Heart left ventricle (tissue), 16 donors: ENCODE measurements at regions of chr9 and their contacts with region 1.

Region 1: DNA sequence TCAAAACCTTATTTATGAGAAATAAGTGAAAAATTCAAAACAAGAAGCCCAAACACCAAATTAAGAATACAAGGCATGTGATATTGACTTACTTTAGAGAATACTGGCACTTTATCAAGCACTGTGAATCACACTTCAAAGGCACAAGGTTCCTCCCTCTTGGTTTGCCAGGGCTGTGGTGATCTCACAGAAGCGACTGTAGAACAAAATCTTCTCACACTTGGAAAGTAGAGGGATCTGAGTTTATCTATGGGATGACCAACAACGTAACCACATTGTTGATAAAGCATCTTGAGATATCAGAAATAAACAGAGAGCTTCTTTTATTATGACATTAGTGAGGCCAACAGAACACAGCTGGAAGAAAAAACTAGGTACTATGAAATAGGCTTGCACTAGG is 295.9 kb downstream of the NFIB start:
- DNase-seq: no peak
- ATAC-seq: no peak
- H3K4me3 ChIP-seq: no peak overlapping the region
- H3K27ac ChIP-seq: peak overlapping the region in 5 of 12 donors; percentile 6 to 28 (median 11)
- H3K4me1 ChIP-seq: peaks cover 0 to 36% (median 9%) of the 10 kb centered on the region in 12 donors
- H3K27me3 ChIP-seq: no peaks in the 10 kb centered on the region
- CTCF ChIP-seq: no peak
- POLR2A ChIP-seq: no peak

Region 2: GRCh38 chr9:13942695-13943094 is 75.4 kb before region 1 on chr9:
- intact Hi-C with region 1: loop called in 1 of 10 experiments (anchors 10 kb)
- DNase-seq: peak in 1 of 5 donors; percentile 49
- ATAC-seq: peak; percentile 43 to 93 (median 82)
- H3K4me3 ChIP-seq: no peak overlapping the region
- H3K27ac ChIP-seq: peak overlapping the region in 6 of 12 donors; percentile 1 to 38 (median 15)
- H3K4me1 ChIP-seq: peaks cover 0 to 32% (median 16%) of the 10 kb centered on the region in 12 donors
- H3K27me3 ChIP-seq: no peaks in the 10 kb centered on the region
- CTCF ChIP-seq: no peak
- POLR2A ChIP-seq: no peak

Region 3: GRCh38 chr9:13962006-13962405 is 56.1 kb before region 1 on chr9:
- intact Hi-C with region 1: loop called in 1 of 10 experiments (anchors 10 kb)
- DNase-seq: no peak
- ATAC-seq: peak in 3 of 4 donors; percentile 42 to 49 (median 44)
- H3K4me3 ChIP-seq: no peak overlapping the region
- H3K27ac ChIP-seq: peak overlapping the region in 1 of 12 donors; percentile 20
- H3K4me1 ChIP-seq: peaks cover 0 to 18% (median 5%) of the 10 kb centered on the region in 12 donors
- H3K27me3 ChIP-seq: no peaks in the 10 kb centered on the region
- CTCF ChIP-seq: no peak
- POLR2A ChIP-seq: no peak

Region 4: GRCh38 chr9:13971966-13972655 is 46.0 kb before region 1 on chr9:
- intact Hi-C with region 1: loop called in 2 of 10 experiments (anchors 5 to 10 kb)
- DNase-seq: no peak
- ATAC-seq: peak in 2 of 4 donors; percentile 28 to 50
- H3K4me3 ChIP-seq: no peak overlapping the region
- H3K27ac ChIP-seq: peak overlapping the region in 6 of 12 donors; percentile 7 to 46 (median 34)
- H3K4me1 ChIP-seq: peaks cover 0 to 36% (median 8%) of the 10 kb centered on the region in 12 donors
- H3K27me3 ChIP-seq: no peaks in the 10 kb centered on the region
- CTCF ChIP-seq: no peak
- POLR2A ChIP-seq: no peak

Region 5: DNA sequence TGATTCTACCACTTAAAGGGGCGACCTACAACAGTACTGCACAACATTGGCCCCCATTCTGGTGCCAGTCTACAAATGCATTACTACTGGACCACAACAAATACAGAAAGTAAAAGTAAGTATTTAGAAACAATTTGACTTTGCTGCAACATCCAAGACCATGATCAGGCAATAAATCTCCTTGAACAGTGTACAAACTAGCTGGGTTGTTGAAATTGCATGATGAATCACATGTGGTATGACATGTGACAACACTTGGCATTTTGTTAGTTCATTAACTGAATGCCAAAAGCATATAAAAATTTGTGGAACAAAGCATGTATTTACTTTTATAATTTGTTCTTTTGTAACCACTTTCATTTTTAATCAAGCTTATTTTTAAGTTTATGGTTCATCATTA is 25.4 kb after region 1 on chr9:
- intact Hi-C with region 1: no loop called
- DNase-seq: no peak
- ATAC-seq: no peak
- H3K4me3 ChIP-seq: no peak overlapping the region
- H3K27ac ChIP-seq: no peak overlapping the region
- H3K4me1 ChIP-seq: no peaks in the 10 kb centered on the region
- H3K27me3 ChIP-seq: no peaks in the 10 kb centered on the region
- CTCF ChIP-seq: no peak
- POLR2A ChIP-seq: no peak

Region 6: GRCh38 chr9:14056316-14056861 is 38.3 kb after region 1 on chr9:
- intact Hi-C with region 1: no loop called
- DNase-seq: no peak
- ATAC-seq: peak in 2 of 4 donors; percentile 24 to 41
- H3K4me3 ChIP-seq: no peak overlapping the region
- H3K27ac ChIP-seq: peak overlapping the region in 1 of 12 donors; percentile 5
- H3K4me1 ChIP-seq: peaks cover 0 to 37% (median 11%) of the 10 kb centered on the region in 12 donors
- H3K27me3 ChIP-seq: no peaks in the 10 kb centered on the region
- CTCF ChIP-seq: no peak
- POLR2A ChIP-seq: no peak